Ascending aorta (tissue), 2 donors: ENCODE measurements at regions of chr10 and their contacts with region 1.

Region 1: DNA sequence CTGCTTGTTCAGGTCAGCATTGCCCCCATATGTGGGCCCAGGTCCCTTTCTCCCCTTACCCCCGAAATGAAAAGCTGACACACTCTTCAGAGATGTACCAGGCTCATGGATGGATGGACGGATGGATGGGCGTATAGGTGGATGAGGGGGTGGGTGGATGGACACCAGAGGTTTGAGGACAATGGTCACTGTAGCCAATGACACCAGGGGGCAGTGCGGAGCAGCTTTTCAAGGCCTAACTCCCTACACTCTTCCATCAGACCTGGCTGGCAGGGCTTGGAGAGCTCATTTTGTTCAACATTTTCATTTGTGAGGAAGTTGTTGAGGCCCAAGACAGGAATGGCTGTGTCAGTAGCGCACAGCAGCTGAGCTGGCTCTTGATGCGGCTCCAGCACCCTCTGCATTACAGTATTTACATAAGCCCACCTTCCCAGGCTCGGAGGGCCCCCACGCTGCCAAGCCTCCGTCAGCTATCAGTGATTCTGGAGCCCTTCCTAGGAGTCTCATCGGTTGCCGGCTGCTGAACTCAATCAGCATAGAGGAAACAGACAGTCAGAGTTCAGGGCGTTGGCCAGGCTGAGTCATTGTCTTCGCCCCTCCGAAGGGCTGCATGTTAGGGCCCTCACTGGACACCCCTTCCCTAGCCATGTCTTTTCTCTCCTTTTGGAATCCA is 11.6 kb upstream of the FFAR4 start:
- DNase-seq: peak in 1 of 2 donors; percentile 79
- H3K4me3 ChIP-seq: no peak overlapping the region
- H3K27ac ChIP-seq: no peak overlapping the region
- H3K4me1 ChIP-seq: no peaks in the 10 kb centered on the region
- H3K27me3 ChIP-seq: no peaks in the 10 kb centered on the region
- CTCF ChIP-seq: peak; percentile 47 to 69 (median 50)

Region 2: DNA sequence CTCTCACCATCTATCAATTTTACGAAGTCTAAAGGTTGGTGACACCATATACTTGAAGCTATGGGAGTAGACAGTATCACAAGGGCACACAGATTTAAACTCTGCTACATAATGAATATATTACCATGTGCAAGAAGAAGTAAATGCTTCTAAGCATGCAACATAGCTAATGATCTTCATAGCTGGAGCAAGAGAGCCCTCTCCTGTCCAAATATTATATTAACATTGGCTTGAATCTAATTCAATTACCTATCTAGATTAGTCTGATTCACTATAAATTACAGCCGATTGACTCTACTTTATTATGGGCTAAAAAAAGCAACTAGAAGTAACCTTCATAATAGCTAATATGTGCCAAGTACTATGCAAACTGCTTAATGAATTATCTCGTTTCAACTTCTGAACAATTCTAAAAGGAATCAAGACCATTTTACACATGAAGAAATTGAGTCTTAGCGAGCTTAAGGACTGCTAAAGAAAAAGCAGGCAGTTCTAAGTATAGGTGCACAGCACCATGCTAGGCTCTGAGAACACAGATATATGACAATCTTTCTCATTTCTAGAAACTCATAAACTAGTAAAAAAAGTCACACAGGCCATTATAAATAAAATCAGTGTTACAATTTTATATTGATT is 125.6 kb after region 1 on chr10:
- intact Hi-C with region 1: loop called (anchors 1 kb)
- DNase-seq: no peak
- H3K4me3 ChIP-seq: no peak overlapping the region
- H3K27ac ChIP-seq: no peak overlapping the region
- H3K4me1 ChIP-seq: no peaks in the 10 kb centered on the region
- H3K27me3 ChIP-seq: no peaks in the 10 kb centered on the region
- CTCF ChIP-seq: peak; percentile 18 to 51 (median 37)

Region 3: DNA sequence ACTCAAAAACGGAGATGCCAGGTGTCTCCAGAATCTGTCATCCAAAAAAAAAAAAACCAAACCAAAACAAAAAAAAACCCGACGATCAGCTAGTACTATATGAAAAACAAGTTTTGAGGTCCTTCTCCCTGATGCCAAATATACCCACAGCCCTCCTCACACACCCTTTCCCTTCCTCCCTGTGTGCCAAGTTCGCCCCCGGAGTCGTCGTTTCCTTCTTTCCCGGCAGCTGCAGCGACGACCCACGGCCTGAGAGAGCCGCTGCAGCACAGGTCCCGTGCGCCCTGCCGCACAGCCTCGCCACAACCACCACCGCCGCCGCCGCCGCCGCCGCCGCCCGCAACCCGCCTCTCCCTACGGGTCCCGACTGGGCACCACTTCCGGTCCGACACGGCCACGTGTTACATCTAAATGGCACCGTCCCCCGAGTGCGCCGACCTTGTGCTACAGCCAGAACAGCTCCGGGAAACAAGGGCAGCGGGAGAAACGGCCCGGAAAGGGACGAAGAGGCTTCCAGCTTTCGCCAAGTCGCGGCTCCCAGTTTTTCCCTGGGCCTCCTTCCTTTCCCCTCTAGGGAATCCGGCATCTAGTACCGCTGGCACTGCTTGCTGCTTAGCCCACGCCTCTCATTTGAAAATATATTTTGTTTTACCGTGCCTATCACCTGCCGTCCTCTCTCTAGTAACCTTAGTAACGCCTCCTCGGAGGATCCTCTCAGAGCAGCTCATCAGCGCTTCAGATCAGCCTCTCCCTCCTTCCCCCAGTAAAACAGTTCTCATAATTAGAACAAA is 147.5 kb after region 1 on chr10 and contains the start of gene FRA10AC1:
- intact Hi-C with region 1: no loop called
- DNase-seq: peak; percentile 65 to 96
- H3K4me3 ChIP-seq: peak within 1 kb of the TSS; percentile 65 to 74
- H3K27ac ChIP-seq: peak within 1 kb of the TSS; percentile 86 to 89
- H3K4me1 ChIP-seq: peaks cover 0 to 4% of the 10 kb centered on the region in 2 donors
- H3K27me3 ChIP-seq: no peaks in the 10 kb centered on the region
- CTCF ChIP-seq: peak; percentile 59 to 73 (median 73)
- total RNA-seq, gene FRA10AC1: 1.7 TPM